ENCODE measurements at regions of chr6 and their contacts with region 1.

Region 1: DNA sequence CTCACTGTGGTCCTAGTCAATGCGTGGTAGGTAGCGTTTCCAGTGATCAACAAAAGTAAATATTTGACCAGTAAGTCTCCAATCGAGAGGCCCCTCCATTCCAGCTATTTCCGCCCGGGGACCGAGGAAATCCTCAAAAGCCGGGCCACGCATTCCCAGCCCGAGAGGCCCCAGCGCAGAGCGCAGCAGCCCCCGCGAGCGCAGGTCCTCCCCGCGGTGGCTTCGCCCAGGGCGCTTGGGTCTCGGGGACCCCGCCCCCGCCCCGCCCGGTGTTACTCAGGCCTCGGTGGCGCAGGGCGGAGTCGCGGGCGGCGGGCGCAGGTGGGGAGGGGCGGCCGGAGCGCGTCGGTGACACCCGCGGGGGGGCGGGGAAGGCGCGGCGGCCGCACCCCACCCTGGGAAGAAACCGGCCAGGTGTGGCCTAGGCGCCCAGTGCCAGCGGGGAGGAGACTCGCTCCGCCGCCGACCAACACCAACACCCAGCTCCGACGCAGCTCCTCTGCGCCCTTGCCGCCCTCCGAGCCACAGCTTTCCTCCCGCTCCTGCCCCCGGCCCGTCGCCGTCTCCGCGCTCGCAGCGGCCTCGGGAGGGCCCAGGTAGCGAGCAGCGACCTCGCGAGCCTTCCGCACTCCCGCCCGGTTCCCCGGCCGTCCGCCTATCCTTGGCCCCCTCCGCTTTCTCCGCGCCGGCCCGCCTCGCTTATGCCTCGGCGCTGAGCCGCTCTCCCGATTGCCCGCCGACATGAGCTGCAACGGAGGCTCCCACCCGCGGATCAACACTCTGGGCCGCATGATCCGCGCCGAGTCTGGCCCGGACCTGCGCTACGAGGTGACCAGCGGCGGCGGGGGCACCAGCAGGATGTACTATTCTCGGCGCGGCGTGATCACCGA is at the start of gene DSP:
- DNase-seq: no peak
- ATAC-seq: peak; percentile 51
- H3K4me3 ChIP-seq: peak within 1 kb of the TSS; percentile 98
- H3K27ac ChIP-seq: peak within 1 kb of the TSS; percentile 14; the same call in 1 of the 2 replicates
- H3K4me1 ChIP-seq: peaks cover 6% of the 10 kb centered on the region
- H3K27me3 ChIP-seq: peaks cover 12% of the 10 kb centered on the region; the same call in 1 of the 2 replicates
- CTCF ChIP-seq: no peak
- POLR2A ChIP-seq: peak; percentile 64
- RAD21 ChIP-seq: no peak
- total RNA-seq, gene DSP: 20.1 and 23.6 TPM in 2 replicates

Region 2: DNA sequence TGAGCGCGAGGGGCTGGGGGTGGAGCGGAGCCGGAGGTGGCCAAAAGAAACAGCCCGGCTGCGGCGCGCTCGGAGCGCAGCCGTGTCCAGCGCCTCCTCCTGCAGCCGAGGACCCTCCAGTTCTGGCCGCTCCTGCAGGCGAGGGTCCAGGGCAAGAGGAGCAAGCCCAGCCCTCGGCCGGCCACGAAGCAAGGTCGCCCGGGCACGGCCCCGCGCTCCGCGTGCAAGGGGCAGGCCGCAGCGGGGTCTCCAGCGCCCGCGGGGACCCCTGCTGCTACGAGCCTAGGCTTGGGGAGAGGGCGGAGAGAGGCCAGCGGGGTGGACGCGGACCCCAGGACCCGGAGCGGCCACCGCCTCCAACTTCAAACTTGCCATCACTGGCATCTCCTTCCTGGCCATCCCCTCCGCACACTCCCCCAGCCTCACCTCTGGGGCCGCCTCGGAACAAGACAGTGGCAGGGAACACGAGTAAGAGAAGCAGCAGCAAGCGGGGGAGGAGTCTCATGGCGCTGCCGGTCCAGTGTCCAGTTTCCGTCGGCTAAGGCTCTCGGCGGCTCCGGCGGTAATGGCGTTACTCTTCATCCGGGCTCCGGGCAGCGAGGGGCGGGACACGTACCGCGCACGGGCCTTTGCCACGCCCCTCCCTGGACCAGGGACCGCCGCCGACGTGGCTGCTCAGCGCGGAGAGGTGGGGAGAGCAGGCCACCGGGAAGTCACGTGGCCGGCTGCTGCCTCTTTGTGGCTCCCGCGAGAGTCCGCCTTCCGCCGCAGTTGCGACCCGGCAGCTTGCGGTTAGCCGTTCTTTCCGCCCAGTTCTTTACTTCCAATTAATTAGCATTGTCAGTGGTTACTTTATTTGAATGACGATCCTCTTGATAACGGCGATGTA is 228.6 kb before region 1 on chr6 and contains the start of gene SSR1:
- CTCF ChIA-PET with region 1: no interaction called
- POLR2A ChIA-PET with region 1: no interaction called
- dilution Hi-C with region 1: no loop called
- in situ Hi-C with region 1: no loop called
- intact Hi-C with region 1: loop called (anchors 5 kb)
- DNase-seq: peak; percentile 95
- ATAC-seq: peak; percentile 99
- H3K4me3 ChIP-seq: peak within 1 kb of the TSS; percentile 84
- H3K27ac ChIP-seq: peak within 1 kb of the TSS; percentile 95
- H3K4me1 ChIP-seq: peaks cover 3% of the 10 kb centered on the region
- H3K27me3 ChIP-seq: no peaks in the 10 kb centered on the region
- CTCF ChIP-seq: no peak
- POLR2A ChIP-seq: peak; percentile 83
- RAD21 ChIP-seq: peak; percentile 11; the same call in 1 of the 2 replicates
- total RNA-seq, gene SSR1: 120 and 213 TPM in 2 replicates

Region 3: GRCh38 chr6:7341989-7342742 is 199.3 kb before region 1 on chr6:
- CTCF ChIA-PET with region 1: no interaction called
- POLR2A ChIA-PET with region 1: no interaction called
- dilution Hi-C with region 1: no loop called
- in situ Hi-C with region 1: no loop called
- intact Hi-C with region 1: no loop called
- DNase-seq: no peak
- ATAC-seq: no peak; the same call in 1 of the 2 replicates
- H3K4me3 ChIP-seq: no peak overlapping the region
- H3K27ac ChIP-seq: no peak overlapping the region
- H3K4me1 ChIP-seq: no peaks in the 10 kb centered on the region
- H3K27me3 ChIP-seq: peaks cover 7% of the 10 kb centered on the region
- CTCF ChIP-seq: no peak
- POLR2A ChIP-seq: no peak
- RAD21 ChIP-seq: no peak

Region 4: GRCh38 chr6:7562769-7563168 is 21.3 kb after region 1 on chr6:
- CTCF ChIA-PET with region 1: no interaction called
- POLR2A ChIA-PET with region 1: interaction called, 13 read pairs
- dilution Hi-C with region 1: no loop called
- in situ Hi-C with region 1: no loop called
- intact Hi-C with region 1: no loop called
- DNase-seq: no peak
- ATAC-seq: no peak
- H3K4me3 ChIP-seq: no peak overlapping the region
- H3K27ac ChIP-seq: no peak overlapping the region
- H3K4me1 ChIP-seq: no peaks in the 10 kb centered on the region
- H3K27me3 ChIP-seq: no peaks in the 10 kb centered on the region; the same call in 1 of the 2 replicates
- CTCF ChIP-seq: no peak
- POLR2A ChIP-seq: no peak
- RAD21 ChIP-seq: no peak